Left cardiac atrium (tissue), 4 donors: ENCODE measurements at regions of chr16 and their contacts with region 1.

Region 1: GRCh38 chr16:77675464-77676324 is 46.6 kb upstream of the NUDT7 start:
- DNase-seq: peak; percentile 54
- ATAC-seq: peak; percentile 88

Region 2: GRCh38 chr16:77971306-77972271 is 295.9 kb after region 1 on chr16:
- intact Hi-C with region 1: loop called (anchors 1 to 5 kb)
- DNase-seq: peak; percentile 86
- ATAC-seq: peak; percentile 84 to 91

Region 3: DNA sequence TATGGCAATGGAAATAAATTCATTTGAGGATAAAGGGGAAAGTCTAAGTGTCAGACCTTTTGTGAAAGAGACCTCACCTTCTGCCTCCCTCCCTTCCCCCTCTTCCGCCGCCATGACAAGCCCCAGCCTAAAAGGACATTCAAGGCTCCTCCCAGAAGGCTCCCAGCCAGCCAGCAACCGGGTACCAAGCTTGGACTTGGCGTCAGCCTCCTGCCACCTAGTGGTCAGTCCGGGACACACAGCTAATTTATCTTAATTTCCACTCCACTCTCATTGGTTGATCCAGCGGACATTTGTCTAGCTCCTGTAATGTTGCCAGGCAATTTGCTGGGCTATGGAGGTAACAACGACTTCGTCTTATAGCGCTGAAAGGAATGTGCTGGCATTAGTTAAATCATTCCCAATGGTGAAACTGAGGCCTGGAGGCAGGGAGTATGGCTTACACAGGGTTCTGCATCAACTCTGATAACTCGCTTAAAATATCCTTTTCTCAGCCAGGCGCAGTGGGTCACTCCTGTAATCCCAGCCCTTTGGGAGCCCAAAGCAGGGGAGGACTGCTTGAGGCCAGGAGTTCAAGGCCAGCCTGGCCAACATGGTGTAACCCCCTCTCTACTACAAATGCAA is 327.3 kb after region 1 on chr16:
- intact Hi-C with region 1: loop called in 1 of 2 experiments (anchors 10 kb)
- DNase-seq: peak; percentile 90
- ATAC-seq: peak; percentile 94 to 95

Region 4: DNA sequence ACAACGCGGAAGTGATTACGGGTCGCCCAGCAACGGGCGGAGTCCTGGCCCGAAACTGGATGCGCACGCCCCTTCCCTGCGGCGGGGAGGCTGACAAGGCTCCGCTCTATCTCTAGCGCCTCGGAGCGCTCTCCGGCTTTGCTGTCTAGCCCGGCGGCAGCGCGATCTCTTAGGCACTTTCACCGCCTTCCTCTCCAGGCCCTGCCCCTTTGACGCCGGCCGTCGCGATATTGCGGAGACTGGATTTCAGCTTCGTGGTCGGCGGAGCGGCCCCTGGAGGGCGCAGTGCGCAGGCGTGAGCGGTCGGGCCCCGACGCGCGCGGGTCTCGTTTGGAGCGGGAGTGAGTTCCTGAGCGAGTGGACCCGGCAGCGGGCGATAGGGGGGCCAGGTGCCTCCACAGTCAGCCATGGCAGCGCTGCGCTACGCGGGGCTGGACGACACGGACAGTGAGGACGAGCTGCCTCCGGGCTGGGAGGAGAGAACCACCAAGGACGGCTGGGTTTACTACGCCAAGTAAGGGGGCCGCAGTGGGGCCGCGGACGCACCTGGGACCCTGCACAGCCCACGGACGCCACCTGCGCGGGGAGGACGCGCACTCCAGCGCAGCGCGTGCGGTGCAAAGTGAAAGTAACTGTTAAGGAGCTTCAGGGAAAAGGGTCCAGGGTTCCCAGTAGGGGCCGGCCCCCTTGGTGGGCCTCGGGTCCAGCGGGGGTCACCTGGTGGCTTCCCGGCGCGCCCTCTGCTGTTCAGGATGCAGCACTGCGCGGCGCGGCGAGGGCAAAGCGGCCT is 423.9 kb after region 1 on chr16 and contains the start of gene WWOX:
- intact Hi-C with region 1: loop called in 1 of 2 experiments (anchors 10 kb)
- DNase-seq: peak; percentile 97
- ATAC-seq: peak; percentile 98
- total RNA-seq, gene WWOX: 7.6 to 8.6 TPM